ENCODE measurements at regions of chr1 and their contacts with region 1.

Region 1: GRCh38 chr1:53837924-53838652 is at the start of gene NDC1:
- DNase-seq: peak; percentile 77 to 96 (median 88)
- ATAC-seq: peak; percentile 90
- H3K4me3 ChIP-seq: peak within 1 kb of the TSS; percentile 82 to 93
- H3K4me3 Mint-ChIP-seq: peak within 1 kb of the TSS; percentile 91
- H3K27ac ChIP-seq: peak within 1 kb of the TSS; percentile 91 to 100
- H3K27ac Mint-ChIP-seq: peak within 1 kb of the TSS; percentile 98
- H3K4me1 ChIP-seq: peaks cover 16% of the 10 kb centered on the region
- H3K4me1 Mint-ChIP-seq: peaks cover 26% of the 10 kb centered on the region
- H3K27me3 ChIP-seq: no peaks in the 10 kb centered on the region
- H3K27me3 Mint-ChIP-seq: peaks cover 3% of the 10 kb centered on the region
- CTCF ChIP-seq: no peak
- total RNA-seq, gene NDC1: 6.1 to 6.6 TPM

Region 2: GRCh38 chr1:53238197-53239155 is 599.6 kb before region 1 on chr1 and contains the start of gene MAGOH:
- CTCF ChIA-PET with region 1: no interaction called
- POLR2A ChIA-PET with region 1: no interaction called
- intact Hi-C with region 1: loop called (anchors 1 to 2 kb)
- DNase-seq: peak; percentile 87 to 97 (median 95)
- ATAC-seq: peak; percentile 97
- H3K4me3 ChIP-seq: peak within 1 kb of the TSS; percentile 94 to 100
- H3K4me3 Mint-ChIP-seq: peak within 1 kb of the TSS; percentile 97
- H3K27ac ChIP-seq: peak within 1 kb of the TSS; percentile 89 to 95
- H3K27ac Mint-ChIP-seq: peak within 1 kb of the TSS; percentile 96
- H3K4me1 ChIP-seq: peaks cover 17% of the 10 kb centered on the region
- H3K4me1 Mint-ChIP-seq: peaks cover 33% of the 10 kb centered on the region
- H3K27me3 ChIP-seq: no peaks in the 10 kb centered on the region
- H3K27me3 Mint-ChIP-seq: no peaks in the 10 kb centered on the region
- CTCF ChIP-seq: no peak
- total RNA-seq, gene MAGOH: 77.2 to 79.5 TPM

Region 3: DNA sequence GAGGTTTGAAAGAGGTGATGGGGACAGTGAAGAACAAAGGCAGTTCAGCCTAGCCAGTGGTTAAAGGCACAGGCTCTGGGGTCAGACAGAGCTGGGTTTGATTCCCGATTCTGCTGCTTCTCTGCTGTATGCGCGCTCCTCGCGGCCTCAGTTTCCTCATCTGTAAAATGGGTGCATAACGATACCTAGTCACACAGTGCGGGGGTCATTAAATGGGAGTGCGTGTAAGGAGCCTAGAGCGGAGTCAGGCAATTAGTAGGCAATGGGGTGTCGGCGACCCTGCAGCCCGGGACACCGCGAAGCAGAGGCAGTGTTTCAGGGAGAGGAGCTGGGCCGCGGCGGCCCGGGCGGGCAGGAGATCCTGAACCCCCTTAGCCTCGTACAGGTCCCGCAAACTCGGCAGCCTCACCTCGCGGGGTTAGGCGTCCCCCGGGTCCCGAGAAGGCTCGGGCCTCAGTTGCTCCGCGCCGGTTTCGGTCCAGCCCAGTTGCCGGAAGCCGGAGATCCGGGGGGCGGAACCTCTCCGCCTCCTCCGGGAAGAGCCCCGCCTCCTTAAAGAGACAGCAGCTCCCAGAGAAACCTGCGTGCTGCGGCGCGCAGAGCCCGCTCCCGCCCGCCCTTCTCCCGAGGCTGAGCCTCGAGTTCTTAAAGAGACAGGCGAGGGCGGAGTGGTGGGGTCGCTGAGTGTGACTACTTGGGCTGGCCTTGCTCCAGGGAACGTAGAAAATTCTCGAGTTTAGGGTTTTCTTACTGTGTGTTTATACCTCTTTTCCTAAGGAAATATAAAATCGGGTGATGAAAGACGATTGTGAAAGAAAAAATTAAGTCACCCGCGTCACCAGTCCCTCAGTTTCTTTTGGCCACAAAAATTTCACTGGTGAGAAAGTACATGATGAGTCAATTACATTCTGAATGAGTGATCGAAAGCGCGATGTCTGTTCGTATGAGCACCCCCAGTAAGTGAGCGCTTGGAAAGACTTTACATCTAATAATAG is 51.5 kb after region 1 on chr1 and contains the start of gene YIPF1:
- CTCF ChIA-PET with region 1: no interaction called
- POLR2A ChIA-PET with region 1: no interaction called
- intact Hi-C with region 1: loop called (anchors 1 kb)
- DNase-seq: peak; percentile 68 to 92 (median 86)
- ATAC-seq: peak; percentile 98
- H3K4me3 ChIP-seq: peak within 1 kb of the TSS; percentile 69 to 97
- H3K4me3 Mint-ChIP-seq: peak within 1 kb of the TSS; percentile 94
- H3K27ac ChIP-seq: peak within 1 kb of the TSS; percentile 42 to 56
- H3K27ac Mint-ChIP-seq: peak within 1 kb of the TSS; percentile 94
- H3K4me1 ChIP-seq: peaks cover 19% of the 10 kb centered on the region
- H3K4me1 Mint-ChIP-seq: peaks cover 49% of the 10 kb centered on the region
- H3K27me3 ChIP-seq: no peaks in the 10 kb centered on the region
- H3K27me3 Mint-ChIP-seq: no peaks in the 10 kb centered on the region
- CTCF ChIP-seq: no peak
- total RNA-seq, gene YIPF1: 4.6 to 5.4 TPM

Region 4: GRCh38 chr1:54199765-54200518 is 361.9 kb after region 1 on chr1 and contains the starts of genes CYB5RL and MRPL37:
- CTCF ChIA-PET with region 1: no interaction called
- POLR2A ChIA-PET with region 1: no interaction called
- intact Hi-C with region 1: loop called (anchors 5 to 10 kb)
- DNase-seq: peak; percentile 74 to 96 (median 89)
- ATAC-seq: peak; percentile 97
- H3K4me3 ChIP-seq: peak within 1 kb of the TSS; percentile 59 to 93
- H3K4me3 Mint-ChIP-seq: peak within 1 kb of the TSS; percentile 94
- H3K27ac ChIP-seq: peak within 1 kb of the TSS; percentile 60 to 75
- H3K27ac Mint-ChIP-seq: peak within 1 kb of the TSS; percentile 84
- H3K4me1 ChIP-seq: peaks cover 19% of the 10 kb centered on the region
- H3K4me1 Mint-ChIP-seq: peaks cover 43% of the 10 kb centered on the region
- H3K27me3 ChIP-seq: no peaks in the 10 kb centered on the region
- H3K27me3 Mint-ChIP-seq: no peaks in the 10 kb centered on the region
- CTCF ChIP-seq: no peak
- total RNA-seq, gene CYB5RL: 2.1 to 3.0 TPM
- total RNA-seq, gene MRPL37: 27.4 to 29.8 TPM

Region 5: DNA sequence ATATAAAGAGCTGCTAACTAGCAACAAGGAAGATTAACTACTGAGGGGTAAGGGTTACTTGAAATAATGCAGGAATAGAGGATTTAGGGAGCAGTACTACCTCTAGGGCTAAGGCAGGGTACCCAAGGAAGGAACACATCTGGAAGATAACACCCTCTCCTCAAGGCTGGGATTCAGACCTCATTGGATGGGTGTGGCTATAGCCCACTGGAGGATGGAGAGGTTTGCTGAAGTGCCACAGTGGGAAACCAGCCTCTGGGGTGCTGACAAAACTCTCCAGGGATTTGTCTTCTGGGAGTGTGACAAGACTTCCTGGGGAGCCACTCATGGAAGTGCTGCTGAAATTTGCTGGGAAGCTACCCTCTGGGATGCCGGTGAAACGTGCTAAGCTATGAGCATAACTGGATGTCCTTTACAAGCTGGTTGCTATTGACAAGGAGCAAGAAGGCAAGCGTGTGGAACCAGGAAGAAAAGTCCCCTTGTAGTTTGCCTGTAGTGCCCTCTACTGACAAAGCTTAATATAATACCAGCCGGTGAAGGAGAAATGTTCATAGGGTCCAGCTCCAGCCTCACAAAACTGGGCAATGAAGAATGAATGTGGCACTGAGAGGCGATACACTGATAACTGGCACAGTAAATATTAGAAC is 1499.8 kb after region 1 on chr1:
- CTCF ChIA-PET with region 1: no interaction called
- POLR2A ChIA-PET with region 1: no interaction called
- intact Hi-C with region 1: no loop called
- DNase-seq: peak in 2 of 9 experiments; percentile 21 to 35
- ATAC-seq: no peak
- H3K4me3 ChIP-seq: no peak overlapping the region
- H3K4me3 Mint-ChIP-seq: no peak overlapping the region
- H3K27ac ChIP-seq: no peak overlapping the region
- H3K27ac Mint-ChIP-seq: no peak overlapping the region
- H3K4me1 ChIP-seq: no peaks in the 10 kb centered on the region
- H3K4me1 Mint-ChIP-seq: no peaks in the 10 kb centered on the region
- H3K27me3 ChIP-seq: no peaks in the 10 kb centered on the region
- H3K27me3 Mint-ChIP-seq: no peaks in the 10 kb centered on the region
- CTCF ChIP-seq: no peak

Measured in CD8-positive, alpha-beta T cell (primary cell).